Right cardiac atrium (tissue), 5 donors: ENCODE measurements at regions of chr15 and their contacts with region 1.

Region 1: DNA sequence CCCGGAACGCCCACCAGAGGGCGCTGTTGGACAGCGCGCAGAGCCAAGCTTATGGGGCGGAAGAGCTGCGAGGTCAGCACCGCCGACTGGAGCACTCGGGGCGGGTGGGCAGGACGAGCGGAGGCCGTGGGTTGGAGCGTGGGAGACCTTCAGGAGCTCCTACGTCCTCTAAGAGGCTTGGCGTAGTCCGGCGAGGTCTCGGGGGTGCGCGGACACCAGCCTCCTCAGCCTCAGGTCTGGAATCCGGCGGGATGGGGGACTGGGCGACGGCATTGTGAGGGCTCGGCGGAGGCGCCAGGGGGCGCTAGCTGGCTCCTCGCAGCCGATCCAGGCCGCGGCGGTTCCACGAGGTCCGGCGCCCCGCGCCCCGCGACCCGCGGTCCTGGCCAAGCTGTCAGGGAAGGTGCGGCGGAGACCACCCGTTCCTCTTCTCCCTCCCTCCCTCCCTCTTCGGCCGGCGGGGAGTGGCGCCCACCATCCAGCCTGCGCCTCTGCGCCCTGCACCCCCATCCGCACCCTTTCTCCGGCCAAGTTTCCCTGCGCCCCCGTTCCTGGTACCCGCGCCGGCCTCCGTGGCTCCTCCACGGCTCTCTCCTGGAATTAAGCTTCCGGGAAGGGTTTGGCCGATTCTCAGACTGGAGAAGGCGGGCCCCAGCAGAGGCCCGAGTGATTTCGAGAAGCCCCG is 24.3 kb upstream of the POLG start:
- DNase-seq: peak; percentile 69 to 89 (median 87)
- ATAC-seq: peak; percentile 89 to 91
- H3K4me3 ChIP-seq: peak overlapping the region; percentile 42
- H3K27ac ChIP-seq: no peak overlapping the region
- H3K4me1 ChIP-seq: no peaks in the 10 kb centered on the region
- H3K27me3 ChIP-seq: no peaks in the 10 kb centered on the region

Region 2: GRCh38 chr15:89430530-89431341 is 71.8 kb after region 1 on chr15:
- intact Hi-C with region 1: loop called (anchors 1 to 5 kb)
- DNase-seq: peak; percentile 81 to 94 (median 94)
- ATAC-seq: peak; percentile 92 to 94
- H3K4me3 ChIP-seq: peak overlapping the region; percentile 40
- H3K27ac ChIP-seq: no peak overlapping the region
- H3K4me1 ChIP-seq: no peaks in the 10 kb centered on the region
- H3K27me3 ChIP-seq: no peaks in the 10 kb centered on the region

Region 3: GRCh38 chr15:89556413-89557262 is 197.7 kb after region 1 on chr15:
- intact Hi-C with region 1: loop called in 1 of 4 experiments (anchors 10 kb)
- DNase-seq: no peak
- ATAC-seq: peak; percentile 45 to 50
- H3K4me3 ChIP-seq: no peak overlapping the region
- H3K27ac ChIP-seq: no peak overlapping the region
- H3K4me1 ChIP-seq: no peaks in the 10 kb centered on the region
- H3K27me3 ChIP-seq: no peaks in the 10 kb centered on the region